ENCODE measurements at regions of chrX and their contacts with region 1.

Region 1: GRCh38 chrX:30141966-30142365 is 73.4 kb upstream of the MAGEB2 start:
- DNase-seq: peak; percentile 82
- H3K4me3 ChIP-seq: no peak overlapping the region
- H3K27ac ChIP-seq: no peak overlapping the region
- H3K4me1 ChIP-seq: no peaks in the 10 kb centered on the region
- H3K27me3 ChIP-seq: no peaks in the 10 kb centered on the region
- CTCF ChIP-seq: peak; percentile 65

Region 2: GRCh38 chrX:30196322-30196721 is 54.4 kb after region 1 on chrX:
- CTCF ChIA-PET with region 1: interaction called, 3 read pairs
- POLR2A ChIA-PET with region 1: no interaction called
- intact Hi-C with region 1: loop called (anchors 5 kb)
- DNase-seq: peak; percentile 61
- H3K4me3 ChIP-seq: no peak overlapping the region
- H3K27ac ChIP-seq: no peak overlapping the region
- H3K4me1 ChIP-seq: no peaks in the 10 kb centered on the region
- H3K27me3 ChIP-seq: no peaks in the 10 kb centered on the region
- CTCF ChIP-seq: peak; percentile 58

Region 3: DNA sequence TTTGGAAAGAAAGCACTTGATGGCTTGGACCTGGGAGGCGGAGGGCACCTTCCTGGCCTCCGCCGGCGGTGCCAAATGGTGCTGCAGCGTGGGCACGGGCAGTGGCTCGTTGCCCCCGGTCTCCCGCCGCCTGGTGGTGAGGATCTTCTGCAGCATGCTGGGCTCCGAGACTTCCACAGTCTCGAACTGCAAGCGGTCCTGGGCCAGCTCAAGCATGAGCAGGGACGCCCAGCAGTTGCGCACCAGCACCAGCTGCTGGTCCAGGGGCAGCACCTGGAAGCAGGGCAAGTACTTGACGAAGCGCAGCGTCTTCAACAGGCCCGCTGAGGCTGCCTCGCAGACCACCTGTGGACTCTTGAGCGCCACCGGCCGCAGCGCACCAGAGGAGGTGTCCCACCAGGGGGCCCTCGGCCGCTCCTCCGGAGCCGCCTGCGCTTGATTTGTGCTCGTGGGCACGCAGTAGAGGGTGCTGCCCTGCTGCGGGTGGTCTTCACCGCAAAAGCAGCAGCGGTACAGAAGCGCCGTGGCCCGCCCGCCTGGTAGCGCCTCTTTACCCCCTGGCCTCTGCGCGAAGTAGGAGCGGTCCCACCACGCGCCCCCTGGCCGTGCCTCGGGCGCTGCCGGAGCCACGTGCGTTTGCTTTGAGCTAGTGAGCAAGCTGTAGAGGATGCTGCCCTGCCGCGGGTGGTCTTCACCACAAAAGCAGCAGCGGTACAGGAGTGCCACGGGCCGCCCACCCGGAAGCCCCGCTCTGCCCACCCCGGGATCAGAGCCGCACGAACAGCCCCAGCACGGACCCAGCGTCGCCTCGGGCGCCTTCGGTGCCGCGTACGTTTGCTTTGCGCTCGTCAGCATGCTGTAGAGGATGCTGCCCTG is 166.5 kb after region 1 on chrX:
- CTCF ChIA-PET with region 1: interaction called, 5 read pairs
- POLR2A ChIA-PET with region 1: no interaction called
- intact Hi-C with region 1: loop called (anchors 2 kb)
- DNase-seq: peak; percentile 79
- H3K4me3 ChIP-seq: peak overlapping the region; percentile 70
- H3K27ac ChIP-seq: peak overlapping the region; percentile 82
- H3K4me1 ChIP-seq: peaks cover 18% of the 10 kb centered on the region
- H3K27me3 ChIP-seq: no peaks in the 10 kb centered on the region
- CTCF ChIP-seq: peak; percentile 72

Region 4: DNA sequence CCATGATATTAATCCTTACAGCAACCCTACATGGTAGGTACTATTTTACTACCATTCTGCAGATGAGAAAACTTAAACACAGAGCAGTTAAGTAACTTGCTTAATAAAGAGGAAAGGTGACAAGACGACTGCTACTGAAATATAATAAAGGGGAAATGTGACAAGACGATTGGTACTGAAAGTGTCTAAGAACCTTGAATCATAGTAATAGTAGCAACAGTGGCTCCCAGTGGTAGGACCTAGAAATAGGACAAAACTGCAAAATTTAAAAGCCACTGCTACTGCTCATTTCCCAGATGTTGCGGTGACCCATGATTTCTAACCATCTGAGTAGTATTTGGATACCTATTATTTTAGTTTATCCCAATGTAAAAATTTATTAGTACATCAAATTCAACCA is 346.1 kb after region 1 on chrX:
- CTCF ChIA-PET with region 1: no interaction called
- POLR2A ChIA-PET with region 1: no interaction called
- intact Hi-C with region 1: loop called (anchors 5 kb)
- DNase-seq: peak; percentile 66
- H3K4me3 ChIP-seq: no peak overlapping the region
- H3K27ac ChIP-seq: no peak overlapping the region
- H3K4me1 ChIP-seq: peaks cover 4% of the 10 kb centered on the region
- H3K27me3 ChIP-seq: no peaks in the 10 kb centered on the region
- CTCF ChIP-seq: peak; percentile 57

Region 5: DNA sequence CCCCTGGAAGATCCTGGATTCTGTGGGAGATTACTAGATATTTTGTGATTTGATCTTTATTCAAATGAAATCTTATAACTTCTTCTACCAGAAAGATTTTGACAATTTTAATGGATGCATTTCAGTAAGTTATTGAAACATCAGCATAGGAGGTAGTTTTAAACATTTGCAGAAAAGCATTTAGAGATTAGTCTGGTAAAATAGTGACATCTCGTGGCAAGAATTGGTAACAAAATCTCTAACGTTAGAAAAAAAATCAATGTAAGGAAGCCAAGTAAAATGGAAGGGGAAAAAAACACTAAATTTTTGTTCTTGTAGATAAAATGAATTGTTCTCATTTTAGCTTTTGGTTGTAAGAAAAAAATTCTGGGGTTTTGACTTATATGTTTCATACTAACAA is 362.3 kb after region 1 on chrX:
- CTCF ChIA-PET with region 1: no interaction called
- POLR2A ChIA-PET with region 1: no interaction called
- intact Hi-C with region 1: loop called (anchors 5 kb)
- DNase-seq: peak; percentile 71
- H3K4me3 ChIP-seq: no peak overlapping the region
- H3K27ac ChIP-seq: no peak overlapping the region
- H3K4me1 ChIP-seq: peaks cover 12% of the 10 kb centered on the region
- H3K27me3 ChIP-seq: no peaks in the 10 kb centered on the region
- CTCF ChIP-seq: peak; percentile 64; the same call in 1 of the 2 replicates

Measured in A673 (cell line).